ENCODE measurements at regions of chr12 and their contacts with region 1.

Region 1: DNA sequence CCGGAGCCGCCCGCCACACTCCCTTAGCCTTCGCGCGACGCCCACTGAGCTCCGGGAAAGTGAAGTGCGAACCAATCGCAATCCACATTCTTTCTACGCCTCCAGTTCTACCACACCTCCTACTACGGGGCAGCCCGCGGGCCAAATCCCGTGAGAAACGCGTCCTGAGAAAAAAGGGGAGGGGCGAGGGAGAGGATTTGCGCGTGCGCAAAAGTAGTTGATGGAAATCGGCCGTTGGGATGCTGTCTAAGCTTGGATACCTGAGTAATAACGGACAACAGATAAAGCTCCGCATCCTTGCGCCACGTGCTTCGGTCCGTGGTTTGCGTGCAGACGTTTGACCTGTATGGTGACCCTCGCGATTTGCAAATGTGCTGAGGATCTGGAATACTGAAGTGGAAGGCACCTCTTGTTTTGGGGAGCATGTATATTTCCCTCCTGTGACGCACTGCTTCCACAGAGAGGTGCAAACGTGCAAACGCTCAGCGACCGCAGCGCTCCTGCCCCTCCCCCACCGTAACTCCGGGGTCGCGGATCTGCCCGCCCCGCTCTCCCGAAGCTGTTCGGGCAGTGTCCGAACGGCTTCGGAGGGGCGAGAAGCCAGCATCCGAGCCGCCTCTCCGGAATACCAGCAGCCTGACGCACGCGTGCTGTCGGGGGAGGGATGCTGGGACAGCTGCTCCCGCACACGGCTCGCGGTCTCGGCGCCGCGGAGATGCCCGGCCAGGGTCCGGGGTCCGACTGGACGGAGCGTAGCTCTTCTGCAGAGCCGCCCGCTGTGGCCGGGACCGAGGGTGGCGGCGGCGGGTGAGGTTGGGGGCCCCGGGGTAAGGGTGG is at the starts of genes FAM216A and GPN3:
- DNase-seq: peak; percentile 93
- H3K4me3 ChIP-seq: peak within 1 kb of the TSS; percentile 78 to 82
- H3K27ac ChIP-seq: peak within 1 kb of the TSS; percentile 92 to 94
- H3K4me1 ChIP-seq: peaks cover 8% of the 10 kb centered on the region in 2 experiments
- H3K27me3 ChIP-seq: no peaks in the 10 kb centered on the region
- CTCF ChIP-seq: no peak
- EP300 ChIP-seq: no peak; a peak in 2 of 4 replicates
- RAD21 ChIP-seq: no peak
- polyA plus RNA-seq, gene FAM216A: 29.8 and 33.1 TPM in 2 replicates
- polyA plus RNA-seq, gene GPN3: 21.6 and 22.5 TPM in 2 replicates

Region 2: GRCh38 chr12:110449799-110450497 is 18.5 kb before region 1 on chr12 and contains the start of gene ARPC3:
- CTCF ChIA-PET with region 1: interaction called, 45 read pairs
- POLR2A ChIA-PET with region 1: interaction called, 26 read pairs
- DNase-seq: peak; percentile 93
- H3K4me3 ChIP-seq: peak within 1 kb of the TSS; percentile 71 to 87
- H3K27ac ChIP-seq: peak within 1 kb of the TSS; percentile 90 to 93
- H3K4me1 ChIP-seq: no peaks in the 10 kb centered on the region; a peak in 1 of 4 replicates
- H3K27me3 ChIP-seq: no peaks in the 10 kb centered on the region
- CTCF ChIP-seq: peak; percentile 85
- EP300 ChIP-seq: no peak
- RAD21 ChIP-seq: peak; percentile 85
- polyA plus RNA-seq, gene ARPC3: 50.5 and 74.7 TPM in 2 replicates

Region 3: GRCh38 chr12:110501399-110501751 is 32.9 kb after region 1 on chr12:
- CTCF ChIA-PET with region 1: interaction called, 11 read pairs
- POLR2A ChIA-PET with region 1: no interaction called
- DNase-seq: peak; percentile 62
- H3K4me3 ChIP-seq: peak overlapping the region; percentile 85 to 94
- H3K27ac ChIP-seq: peak overlapping the region; percentile 70 to 79
- H3K4me1 ChIP-seq: peaks cover 10 to 20% of the 10 kb centered on the region in 2 experiments; a peak in 3 of 4 replicates
- H3K27me3 ChIP-seq: no peaks in the 10 kb centered on the region
- CTCF ChIP-seq: no peak
- EP300 ChIP-seq: no peak
- RAD21 ChIP-seq: no peak

Region 4: DNA sequence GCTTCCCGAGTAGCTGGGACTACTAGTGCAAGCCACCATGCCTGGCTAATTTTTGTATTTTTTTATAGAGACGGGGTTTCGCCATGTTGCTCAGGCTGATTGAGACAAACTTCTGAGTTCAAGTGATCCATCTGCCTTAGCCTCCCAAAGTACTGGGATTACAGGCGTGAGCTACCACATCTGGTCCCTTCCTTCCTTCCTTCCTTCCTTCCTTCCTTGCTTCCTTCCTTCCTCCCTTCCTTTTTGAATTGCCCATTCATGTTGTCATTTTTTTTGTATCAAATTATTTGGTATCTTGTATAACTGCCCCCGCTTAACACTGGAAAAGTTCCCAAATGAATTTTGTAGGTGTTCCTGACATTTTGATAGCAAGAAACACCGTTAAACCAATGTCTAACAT is 45.4 kb after region 1 on chr12:
- CTCF ChIA-PET with region 1: interaction called, 14 read pairs
- POLR2A ChIA-PET with region 1: no interaction called
- DNase-seq: no peak
- H3K4me3 ChIP-seq: no peak overlapping the region
- H3K27ac ChIP-seq: no peak overlapping the region
- H3K4me1 ChIP-seq: no peaks in the 10 kb centered on the region
- H3K27me3 ChIP-seq: no peaks in the 10 kb centered on the region
- CTCF ChIP-seq: no peak
- EP300 ChIP-seq: no peak
- RAD21 ChIP-seq: no peak

Region 5: DNA sequence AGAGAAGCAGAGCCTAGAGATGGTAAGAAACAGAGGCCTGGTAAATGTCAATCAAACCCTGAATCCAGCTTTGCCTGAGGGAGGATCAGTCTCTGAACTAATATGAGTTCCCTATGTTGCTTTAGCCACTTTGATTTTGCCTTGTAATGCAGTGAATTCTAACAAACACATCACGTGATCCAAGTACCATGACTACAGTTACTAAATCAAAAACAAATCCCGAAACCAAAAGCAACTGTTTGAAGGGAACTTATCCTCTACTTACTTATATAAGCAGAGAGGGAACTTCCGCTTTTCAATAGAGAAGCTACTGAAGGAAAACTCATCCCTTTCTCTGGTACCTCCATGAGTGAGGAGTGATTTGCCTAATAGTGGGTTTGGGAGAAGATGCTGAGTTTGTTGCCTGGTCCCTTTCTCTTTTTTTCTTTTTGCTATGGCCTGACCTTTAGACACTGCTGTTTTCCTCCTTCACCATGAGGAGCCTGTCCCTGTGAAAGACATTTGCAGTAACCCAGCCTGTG is 122.4 kb after region 1 on chr12:
- CTCF ChIA-PET with region 1: interaction called, 10 read pairs
- POLR2A ChIA-PET with region 1: no interaction called
- DNase-seq: no peak
- H3K4me3 ChIP-seq: no peak overlapping the region
- H3K27ac ChIP-seq: no peak overlapping the region; a peak in 1 of 4 replicates
- H3K4me1 ChIP-seq: peaks cover 0 to 2% of the 10 kb centered on the region in 2 experiments; a peak in 1 of 4 replicates
- H3K27me3 ChIP-seq: no peaks in the 10 kb centered on the region
- CTCF ChIP-seq: no peak
- EP300 ChIP-seq: no peak
- RAD21 ChIP-seq: no peak

Measured in SK-N-SH (cell line).